ENCODE measurements at regions of chr14 and their contacts with region 1.

Region 1: GRCh38 chr14:88492272-88493089 is 62.3 kb downstream of the PTPN21 start:
- DNase-seq: peak; percentile 10
- H3K4me3 ChIP-seq: no peak overlapping the region
- H3K27me3 ChIP-seq: no peaks in the 10 kb centered on the region
- CTCF ChIP-seq: peak; percentile 81

Region 2: DNA sequence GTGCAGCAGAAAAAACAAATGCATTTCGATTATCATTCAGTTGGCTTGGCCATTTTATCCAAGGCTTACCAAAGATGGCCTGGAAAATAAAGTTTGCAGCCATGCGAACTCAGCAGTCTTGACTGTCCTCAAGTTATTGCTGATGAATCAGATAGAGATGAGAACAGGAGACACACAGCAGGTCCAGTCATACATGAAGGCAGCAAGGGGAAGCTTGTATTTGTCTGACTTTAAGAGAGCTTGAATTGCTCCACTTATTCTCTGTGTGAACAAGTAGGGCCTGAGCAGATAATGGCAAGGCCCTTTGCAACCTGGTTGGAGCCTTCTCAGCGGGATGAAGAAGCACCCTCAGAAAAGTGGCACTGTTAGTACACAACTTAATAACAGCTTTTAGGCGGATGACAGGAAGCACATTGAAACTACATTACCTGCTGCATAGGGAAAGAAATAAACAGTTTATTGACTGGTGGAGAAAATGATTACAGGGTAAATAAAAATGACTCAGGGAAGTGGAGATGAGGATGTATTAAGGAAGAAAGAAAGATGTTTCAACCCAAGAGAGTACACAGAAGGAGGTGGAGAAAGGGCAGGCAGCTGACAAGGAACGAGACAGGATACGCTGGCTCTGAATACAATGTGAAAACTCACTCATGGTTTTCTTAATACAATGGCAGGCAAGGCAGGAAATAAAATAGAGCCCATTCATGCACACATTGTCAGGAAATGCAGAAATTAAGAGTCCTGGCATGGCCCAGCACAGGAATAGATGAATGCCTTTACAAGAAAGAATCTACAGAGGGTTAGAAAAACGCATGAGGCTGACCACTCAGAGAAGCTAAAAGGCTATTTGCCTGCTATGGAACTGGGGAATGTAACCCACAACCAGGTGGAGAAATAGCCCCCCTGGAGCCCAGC is 627.9 kb before region 1 on chr14:
- CTCF ChIA-PET with region 1: no interaction called
- POLR2A ChIA-PET with region 1: no interaction called
- DNase-seq: no peak
- H3K4me3 ChIP-seq: no peak overlapping the region
- H3K27me3 ChIP-seq: no peaks in the 10 kb centered on the region
- CTCF ChIP-seq: no peak

Region 3: DNA sequence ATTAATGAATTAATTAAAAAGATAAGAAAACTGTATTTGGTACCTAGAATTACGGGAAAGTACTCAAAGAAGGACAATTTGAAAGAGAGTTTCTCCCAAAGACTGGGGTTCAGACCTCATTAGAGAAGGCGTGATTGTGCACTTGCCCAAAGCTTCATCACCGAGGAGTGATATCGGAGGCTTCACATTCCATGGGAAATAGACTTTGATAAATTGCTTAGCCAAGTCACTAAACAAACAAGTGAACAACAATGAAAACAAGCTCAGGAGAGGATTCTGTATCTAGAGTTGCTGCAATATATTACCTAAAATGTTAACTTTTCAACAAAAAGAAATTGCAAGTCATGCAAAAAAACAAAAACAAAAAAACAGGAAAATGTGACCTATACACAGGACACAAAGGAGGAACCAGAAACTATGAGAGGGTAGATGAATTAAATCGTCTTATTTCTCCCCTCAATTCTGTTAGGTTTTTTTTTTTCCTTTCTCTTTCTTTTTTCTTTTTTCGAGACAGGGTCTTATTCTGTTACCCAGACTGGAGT is 103.7 kb before region 1 on chr14:
- CTCF ChIA-PET with region 1: no interaction called
- POLR2A ChIA-PET with region 1: no interaction called
- DNase-seq: no peak
- H3K4me3 ChIP-seq: no peak overlapping the region
- H3K27me3 ChIP-seq: no peaks in the 10 kb centered on the region
- CTCF ChIP-seq: no peak

Region 4: GRCh38 chr14:88468396-88468795 is 24.1 kb before region 1 on chr14:
- CTCF ChIA-PET with region 1: no interaction called
- POLR2A ChIA-PET with region 1: no interaction called
- DNase-seq: peak; percentile 78
- H3K4me3 ChIP-seq: no peak overlapping the region
- H3K27me3 ChIP-seq: no peaks in the 10 kb centered on the region
- CTCF ChIP-seq: no peak

Region 5: DNA sequence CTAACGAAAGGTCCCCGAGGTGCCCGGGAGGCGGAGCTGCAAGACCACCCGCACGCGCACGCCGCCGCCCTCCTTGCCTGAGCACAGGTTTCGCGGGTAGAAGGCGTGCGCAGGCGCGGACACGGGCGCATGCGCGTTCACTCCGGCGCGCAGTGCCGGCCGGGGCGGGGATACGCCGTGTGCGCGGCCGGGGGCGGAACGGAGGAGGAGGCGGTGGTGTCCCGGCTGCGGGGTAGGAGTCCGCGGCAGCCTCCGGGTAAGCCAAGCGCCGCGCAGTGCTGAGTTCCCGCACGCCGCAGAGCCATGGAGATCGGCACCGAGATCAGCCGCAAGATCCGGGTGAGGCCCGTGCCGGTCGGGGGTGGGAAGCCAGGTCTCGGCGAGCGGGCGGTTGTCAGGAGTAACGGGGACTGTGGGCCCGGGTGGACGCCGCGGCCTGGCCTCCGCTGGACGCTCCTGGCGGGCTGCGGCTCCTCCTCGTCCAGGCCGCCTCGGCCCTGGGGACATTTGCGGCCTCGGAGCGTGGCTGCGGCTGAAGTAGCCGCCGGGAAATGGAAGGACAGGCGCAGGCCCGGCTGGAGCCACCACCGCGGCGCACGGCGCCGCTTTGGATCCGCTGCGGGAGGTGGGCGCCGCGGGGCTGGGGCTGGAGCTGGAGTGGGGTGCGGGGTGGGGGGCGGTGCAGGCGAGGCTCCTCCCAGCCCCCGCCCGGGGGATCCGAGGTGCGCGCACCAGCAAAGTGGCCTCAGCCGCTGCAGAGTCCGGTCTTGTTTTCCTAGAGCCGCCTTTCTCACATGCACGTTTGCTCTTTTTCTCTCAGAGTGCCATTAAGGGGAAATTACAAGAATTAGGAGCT is 70.6 kb after region 1 on chr14 and contains the start of gene ZC3H14:
- CTCF ChIA-PET with region 1: interaction called, 29 read pairs
- POLR2A ChIA-PET with region 1: no interaction called
- DNase-seq: no peak
- H3K4me3 ChIP-seq: peak within 1 kb of the TSS; percentile 95
- H3K27me3 ChIP-seq: no peaks in the 10 kb centered on the region
- CTCF ChIP-seq: no peak
- polyA plus RNA-seq, gene ZC3H14: 81.8 and 112 TPM in 2 replicates

Measured in BJ (cell line).